ENCODE measurements at regions of chr22 and their contacts with region 1.

Region 1: DNA sequence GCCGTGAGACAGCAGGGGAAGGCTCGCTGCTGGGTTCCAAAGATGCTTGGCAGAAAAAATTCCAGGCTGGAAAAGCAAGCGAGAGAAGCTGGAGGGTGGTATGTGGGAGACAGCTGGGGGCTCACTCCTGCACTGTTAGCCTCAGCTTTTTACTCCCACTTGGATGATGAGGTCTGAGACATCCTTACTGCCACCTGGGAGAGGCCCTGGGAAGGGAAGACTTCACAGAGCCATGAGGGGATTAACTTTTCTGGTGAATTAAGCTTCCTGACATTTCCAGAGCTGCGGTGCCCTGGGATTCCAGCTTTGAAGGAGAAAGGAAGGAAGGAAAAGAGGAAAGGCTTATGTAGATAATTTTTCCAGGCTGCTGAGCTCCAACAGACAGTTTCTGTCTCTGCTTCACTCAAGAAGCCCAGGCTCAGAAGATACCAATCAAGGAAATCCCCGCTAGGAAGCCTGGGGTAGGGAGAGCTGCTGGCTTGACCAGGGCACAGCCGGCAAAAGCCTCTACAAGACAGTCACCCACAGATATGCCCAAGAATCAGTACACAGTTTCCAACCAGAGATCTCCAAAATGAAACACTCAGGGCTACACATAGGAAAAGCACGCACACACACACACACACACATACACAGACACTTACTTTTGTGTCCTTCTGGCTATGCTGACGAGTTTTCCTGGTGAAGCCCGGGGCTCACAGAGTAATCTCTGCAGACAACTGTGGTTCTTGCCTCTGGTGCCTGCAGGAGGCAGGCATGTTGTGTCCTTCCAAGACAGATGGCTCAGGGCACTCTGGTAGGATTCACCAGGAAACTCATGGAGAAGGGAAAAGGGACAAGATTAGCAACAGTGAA is 907 bp downstream of the MCHR1 start:
- DNase-seq: peak; percentile 34
- H3K4me3 ChIP-seq: no peak overlapping the region
- H3K27ac ChIP-seq: peak overlapping the region; percentile 43
- H3K4me1 ChIP-seq: peaks cover 26% of the 10 kb centered on the region
- H3K27me3 ChIP-seq: no peaks in the 10 kb centered on the region
- CTCF ChIP-seq: 0 out of 2 replicates have a peak, but pooled peaks have one; percentile 25

Region 2: DNA sequence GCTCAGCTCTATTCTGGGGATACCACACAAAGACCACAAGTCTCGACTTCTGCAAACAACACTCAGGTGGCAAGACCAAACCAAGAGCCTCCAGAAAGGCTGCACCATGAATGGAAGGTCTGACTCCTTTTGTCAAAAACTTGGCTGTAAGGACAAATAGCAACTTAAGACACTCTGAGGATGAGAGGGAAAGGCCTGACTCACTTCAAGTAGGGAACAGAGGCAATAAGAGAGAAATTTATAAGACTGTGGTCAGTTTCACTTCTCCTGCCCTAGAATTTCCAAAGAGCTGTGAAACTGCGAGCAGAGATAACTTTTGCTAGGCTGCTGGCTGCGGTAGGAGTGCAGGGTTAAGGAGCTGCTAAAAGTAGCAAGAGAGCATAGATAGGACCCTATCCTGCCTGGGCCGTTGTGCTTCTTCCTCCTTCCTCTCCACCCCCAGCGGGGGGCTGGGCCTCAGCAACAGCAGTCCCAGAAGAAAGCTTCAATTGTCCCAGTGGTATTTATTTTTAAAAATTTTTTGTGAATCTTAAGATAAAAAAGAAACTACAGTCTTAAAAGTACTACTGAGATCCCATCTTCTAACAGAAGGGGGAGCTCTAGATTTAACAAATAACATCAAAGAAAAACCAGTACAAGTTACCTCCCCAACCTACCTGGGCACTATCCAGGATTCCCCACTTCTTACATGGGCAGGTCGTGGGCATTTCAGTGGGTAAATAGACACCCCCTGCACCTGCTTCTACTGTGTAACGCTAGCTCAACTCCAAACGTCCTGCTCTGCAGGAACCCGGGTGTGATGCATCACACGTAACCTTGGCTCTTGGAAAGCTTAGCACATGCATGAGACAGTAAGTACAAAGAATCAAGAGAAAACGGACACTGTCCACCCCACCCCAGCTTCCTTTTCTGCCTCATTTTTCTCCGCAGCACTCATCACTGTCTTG is 243.4 kb before region 1 on chr22:
- CTCF ChIA-PET with region 1: interaction called, 13 read pairs
- POLR2A ChIA-PET with region 1: no interaction called
- intact Hi-C with region 1: no loop called
- DNase-seq: peak; percentile 50
- H3K4me3 ChIP-seq: no peak overlapping the region
- H3K27ac ChIP-seq: no peak overlapping the region
- H3K4me1 ChIP-seq: peaks cover 6% of the 10 kb centered on the region
- H3K27me3 ChIP-seq: no peaks in the 10 kb centered on the region
- CTCF ChIP-seq: peak; percentile 80

Region 3: DNA sequence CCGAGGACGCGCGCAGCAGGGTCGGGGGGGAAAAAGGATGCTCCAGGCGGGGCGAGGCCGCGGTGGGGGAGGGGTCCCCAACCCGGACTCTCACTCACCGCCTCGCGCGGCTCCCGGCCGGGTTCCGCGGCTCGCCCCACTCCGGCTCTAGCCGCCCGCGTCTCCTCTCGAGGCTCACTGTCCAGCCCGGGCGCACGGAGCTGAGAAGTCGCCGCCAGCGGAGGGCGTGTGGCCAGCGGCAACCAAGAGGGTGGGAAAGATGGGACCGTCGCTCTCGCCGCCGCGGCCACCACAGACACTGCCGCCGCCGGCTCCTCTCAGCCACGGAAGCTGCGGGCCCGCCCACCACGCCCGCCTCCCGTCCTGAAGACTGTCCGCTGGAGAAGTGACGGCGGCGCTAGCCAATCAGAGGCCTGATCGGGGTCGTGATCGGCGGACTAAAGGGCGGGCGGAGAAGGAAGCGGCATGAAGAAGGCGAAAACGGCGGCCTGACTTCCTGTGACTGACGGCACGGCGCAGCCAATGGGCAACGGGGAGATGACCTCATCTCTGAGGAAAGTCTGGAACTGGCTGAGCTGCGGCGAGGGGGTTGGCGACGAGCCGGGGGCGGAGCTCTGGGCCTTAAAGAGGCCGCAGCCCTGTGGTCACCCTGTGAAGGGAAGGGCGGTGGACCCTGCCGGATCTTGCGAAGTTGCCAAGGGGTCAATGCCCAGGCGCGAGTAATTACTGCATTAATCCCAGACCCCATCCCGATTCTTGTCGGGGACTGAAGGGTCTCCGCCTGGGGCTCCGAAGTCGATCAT is 43.6 kb before region 1 on chr22 and contains the start of gene MRTFA:
- CTCF ChIA-PET with region 1: no interaction called
- POLR2A ChIA-PET with region 1: no interaction called
- intact Hi-C with region 1: no loop called
- DNase-seq: peak; percentile 100
- H3K4me3 ChIP-seq: peak within 1 kb of the TSS; percentile 96
- H3K27ac ChIP-seq: peak within 1 kb of the TSS; percentile 80
- H3K4me1 ChIP-seq: peaks cover 9% of the 10 kb centered on the region
- H3K27me3 ChIP-seq: no peaks in the 10 kb centered on the region
- CTCF ChIP-seq: no peak
- total RNA-seq, gene MRTFA: 35.8 and 41.2 TPM in 2 replicates

Region 4: DNA sequence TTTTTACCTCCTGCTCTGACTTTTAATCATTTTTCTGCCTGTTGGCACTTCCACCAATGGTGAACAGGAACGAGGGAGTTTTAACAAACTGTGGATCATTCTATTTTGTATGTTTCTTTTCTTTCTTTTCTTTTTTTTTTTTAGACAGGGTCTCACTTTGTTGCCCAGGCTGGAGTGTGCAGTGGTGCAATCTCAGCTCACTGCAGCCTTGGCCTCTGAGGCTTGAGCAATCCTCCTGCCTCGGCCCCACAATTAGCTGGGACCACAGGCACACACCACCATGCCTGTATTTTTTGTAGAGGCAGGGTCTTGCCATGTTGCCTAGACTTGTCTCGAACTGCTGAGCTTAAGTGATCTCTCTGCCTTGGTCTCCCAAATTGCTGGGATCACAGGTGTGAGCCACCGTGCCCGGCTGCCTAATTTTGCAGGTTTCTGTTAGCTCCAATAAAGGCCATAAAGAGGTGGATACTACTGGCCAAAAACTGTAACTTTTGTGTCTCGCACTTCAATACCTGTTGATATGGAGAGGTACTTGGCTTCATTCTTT is 79.2 kb after region 1 on chr22:
- CTCF ChIA-PET with region 1: interaction called, 51 read pairs
- POLR2A ChIA-PET with region 1: interaction called, 3 read pairs
- intact Hi-C with region 1: loop called (anchors 1 kb)
- DNase-seq: no peak
- H3K4me3 ChIP-seq: no peak overlapping the region
- H3K27ac ChIP-seq: no peak overlapping the region
- H3K4me1 ChIP-seq: peaks cover 3% of the 10 kb centered on the region
- H3K27me3 ChIP-seq: no peaks in the 10 kb centered on the region
- CTCF ChIP-seq: no peak

Region 5: DNA sequence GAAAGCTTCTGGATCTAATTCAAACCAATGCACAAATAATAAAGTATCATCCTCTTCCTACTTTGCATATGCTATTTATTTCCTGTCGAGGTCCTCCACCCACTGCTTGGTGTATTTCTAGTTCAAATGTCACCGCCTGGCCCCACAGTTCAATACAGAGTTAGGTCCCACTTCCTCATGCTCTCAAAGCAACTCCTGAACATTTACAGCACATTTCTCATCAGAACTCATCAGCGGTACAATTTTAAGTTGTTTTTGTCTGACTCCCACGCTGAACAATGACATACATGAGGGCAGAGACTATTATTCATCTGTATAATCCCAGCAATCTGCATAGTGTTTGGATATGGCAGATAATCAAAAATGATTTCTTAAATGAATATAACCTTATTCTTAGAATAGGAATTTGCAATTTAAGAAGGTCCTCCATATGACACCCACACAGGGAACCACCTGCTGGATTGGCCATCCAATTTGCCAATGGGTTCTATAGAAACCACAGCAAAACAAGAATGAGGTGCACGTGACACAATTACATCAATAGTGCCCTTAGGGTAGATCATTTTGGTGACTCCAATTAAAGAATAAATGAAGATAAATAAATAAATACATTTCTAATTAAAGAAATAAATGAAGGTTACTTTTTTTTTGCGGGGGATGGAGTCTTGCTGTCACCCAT is 84.7 kb after region 1 on chr22:
- CTCF ChIA-PET with region 1: interaction called, 51 read pairs
- POLR2A ChIA-PET with region 1: no interaction called
- intact Hi-C with region 1: loop called (anchors 1 kb)
- DNase-seq: no peak
- H3K4me3 ChIP-seq: no peak overlapping the region
- H3K27ac ChIP-seq: no peak overlapping the region
- H3K4me1 ChIP-seq: no peaks in the 10 kb centered on the region
- H3K27me3 ChIP-seq: no peaks in the 10 kb centered on the region
- CTCF ChIP-seq: no peak

Region 6: DNA sequence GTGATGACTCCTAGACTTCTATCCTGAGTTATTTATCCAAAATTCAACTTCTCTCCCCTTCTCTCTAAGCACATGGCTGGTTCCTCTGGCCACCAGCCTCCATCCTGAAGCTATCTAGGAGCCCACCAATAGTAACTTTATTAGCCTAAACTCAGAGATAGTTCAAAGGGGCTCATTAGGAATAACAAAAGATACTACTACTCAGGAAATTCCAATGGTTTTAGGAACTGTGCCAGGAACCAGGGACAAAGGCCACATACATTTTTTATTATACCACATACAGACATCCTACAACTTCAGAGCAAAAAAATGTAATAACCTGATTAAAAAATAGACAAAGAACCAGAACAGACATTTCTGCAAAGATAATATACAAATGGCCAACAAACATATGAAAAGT is 111.0 kb after region 1 on chr22:
- CTCF ChIA-PET with region 1: no interaction called
- POLR2A ChIA-PET with region 1: no interaction called
- intact Hi-C with region 1: no loop called
- DNase-seq: peak; percentile 95
- H3K4me3 ChIP-seq: no peak overlapping the region
- H3K27ac ChIP-seq: peak overlapping the region; percentile 67
- H3K4me1 ChIP-seq: peaks cover 31% of the 10 kb centered on the region
- H3K27me3 ChIP-seq: no peaks in the 10 kb centered on the region
- CTCF ChIP-seq: no peak

Region 7: GRCh38 chr22:40818747-40819598 is 138.8 kb after region 1 on chr22 and contains the start of gene SLC25A17:
- CTCF ChIA-PET with region 1: interaction called, 5 read pairs
- POLR2A ChIA-PET with region 1: no interaction called
- intact Hi-C with region 1: loop called (anchors 1 kb)
- DNase-seq: peak; percentile 94
- H3K4me3 ChIP-seq: peak within 1 kb of the TSS; percentile 85
- H3K27ac ChIP-seq: peak within 1 kb of the TSS; percentile 87
- H3K4me1 ChIP-seq: peaks cover 15% of the 10 kb centered on the region
- H3K27me3 ChIP-seq: no peaks in the 10 kb centered on the region
- CTCF ChIP-seq: peak; percentile 43
- total RNA-seq, gene SLC25A17: 42.7 and 51.6 TPM in 2 replicates

Region 8: GRCh38 chr22:40898850-40899357 is 218.7 kb after region 1 on chr22:
- CTCF ChIA-PET with region 1: interaction called, 21 read pairs
- POLR2A ChIA-PET with region 1: no interaction called
- intact Hi-C with region 1: loop called (anchors 1 kb)
- DNase-seq: peak; percentile 84
- H3K4me3 ChIP-seq: no peak overlapping the region
- H3K27ac ChIP-seq: no peak overlapping the region
- H3K4me1 ChIP-seq: peaks cover 5% of the 10 kb centered on the region
- H3K27me3 ChIP-seq: no peaks in the 10 kb centered on the region
- CTCF ChIP-seq: peak; percentile 72

Measured in A673 (cell line).